Activated T-helper 1 cell treated with anti-CD3 and anti-CD28 coated beads, Interleukin-12 subunit alpha, Interleukin-12 subunit beta, Interleukin-2, Interleukin-4 antibody, amounts not matched to agents 30 ng/mL and 10 ng/mL and 1 ng/mL, durations not matched to agents 14 hours and 24 hours and 36 hours (primary cell): ENCODE measurements at regions of chr15 and their contacts with region 1.

Region 1: DNA sequence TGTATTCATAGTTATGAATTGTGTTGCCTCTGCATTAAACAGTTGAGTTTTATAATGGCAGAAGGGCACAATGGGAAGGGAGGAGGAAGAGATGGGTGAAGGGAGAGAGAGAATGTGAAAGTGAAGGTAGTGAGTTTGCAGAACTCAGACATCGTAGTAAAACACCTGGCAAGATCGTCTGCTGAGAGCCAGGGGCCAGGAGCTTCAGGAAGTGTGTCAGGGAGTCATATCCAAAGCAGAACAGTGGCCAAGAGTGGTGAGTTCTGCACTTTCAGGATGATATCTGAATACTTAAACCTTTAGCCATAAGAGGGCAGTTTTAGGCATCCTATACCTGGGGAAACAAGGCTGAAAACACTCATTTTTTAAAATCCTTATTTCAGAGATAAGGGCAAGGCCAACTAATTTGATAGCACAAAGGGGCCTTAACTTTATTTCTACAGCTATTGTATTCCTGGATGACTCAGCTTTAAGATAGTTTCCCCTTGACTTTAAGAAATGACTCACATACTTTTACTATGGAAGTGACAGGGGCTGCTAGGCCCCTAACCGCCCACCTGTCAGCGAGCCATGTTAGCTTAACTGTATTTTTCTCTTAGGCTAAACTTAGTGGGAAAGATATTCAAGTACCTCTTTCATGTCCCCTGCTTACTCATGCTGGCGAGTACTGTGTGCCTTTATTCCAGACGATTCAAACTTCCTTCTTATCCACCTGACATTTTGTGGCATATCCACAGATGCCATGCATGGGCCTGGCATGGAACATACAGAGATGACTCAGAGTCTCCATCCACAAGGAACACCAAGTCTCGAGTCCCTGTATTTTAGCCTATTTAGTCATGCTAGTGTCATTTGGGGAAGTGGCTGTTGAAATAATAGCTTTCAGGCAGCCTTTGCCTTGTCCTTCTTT is 53.9 kb downstream of the RLBP1 start:
- DNase-seq: no peak
- H3K4me3 Mint-ChIP-seq: peak overlapping the region; percentile 65
- H3K27ac Mint-ChIP-seq: peak overlapping the region; percentile 90
- H3K4me1 Mint-ChIP-seq: peaks cover 31% of the 10 kb centered on the region
- H3K27me3 Mint-ChIP-seq: no peaks in the 10 kb centered on the region

Region 2: DNA sequence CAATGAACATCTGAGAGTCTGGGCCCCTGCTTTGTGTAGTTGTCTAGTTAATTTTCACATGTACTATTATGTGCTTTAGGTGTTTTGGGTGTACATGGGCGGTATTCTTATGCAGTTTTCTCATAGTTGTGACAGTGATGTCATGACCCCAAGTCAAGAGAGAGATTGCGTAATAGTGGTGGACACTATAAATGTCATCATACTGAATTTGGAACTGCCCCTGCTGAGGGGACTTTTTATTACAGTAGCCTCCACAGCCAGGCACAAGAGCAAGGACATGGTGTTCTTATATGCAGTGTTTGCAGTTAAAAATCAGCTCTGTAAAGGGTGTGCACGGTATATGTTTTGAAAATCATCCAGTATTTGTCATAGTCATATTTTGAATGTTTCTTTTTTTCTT is 49.7 kb before region 1 on chr15:
- intact Hi-C with region 1: no loop called
- DNase-seq: no peak
- H3K4me3 Mint-ChIP-seq: no peak overlapping the region
- H3K27ac Mint-ChIP-seq: no peak overlapping the region
- H3K4me1 Mint-ChIP-seq: peaks cover 16% of the 10 kb centered on the region
- H3K27me3 Mint-ChIP-seq: no peaks in the 10 kb centered on the region

Region 3: GRCh38 chr15:89129123-89129815 is 38.3 kb before region 1 on chr15:
- intact Hi-C with region 1: loop called (anchors 5 kb)
- DNase-seq: peak; percentile 16
- H3K4me3 Mint-ChIP-seq: no peak overlapping the region
- H3K27ac Mint-ChIP-seq: no peak overlapping the region
- H3K4me1 Mint-ChIP-seq: peaks cover 19% of the 10 kb centered on the region
- H3K27me3 Mint-ChIP-seq: no peaks in the 10 kb centered on the region

Region 4: DNA sequence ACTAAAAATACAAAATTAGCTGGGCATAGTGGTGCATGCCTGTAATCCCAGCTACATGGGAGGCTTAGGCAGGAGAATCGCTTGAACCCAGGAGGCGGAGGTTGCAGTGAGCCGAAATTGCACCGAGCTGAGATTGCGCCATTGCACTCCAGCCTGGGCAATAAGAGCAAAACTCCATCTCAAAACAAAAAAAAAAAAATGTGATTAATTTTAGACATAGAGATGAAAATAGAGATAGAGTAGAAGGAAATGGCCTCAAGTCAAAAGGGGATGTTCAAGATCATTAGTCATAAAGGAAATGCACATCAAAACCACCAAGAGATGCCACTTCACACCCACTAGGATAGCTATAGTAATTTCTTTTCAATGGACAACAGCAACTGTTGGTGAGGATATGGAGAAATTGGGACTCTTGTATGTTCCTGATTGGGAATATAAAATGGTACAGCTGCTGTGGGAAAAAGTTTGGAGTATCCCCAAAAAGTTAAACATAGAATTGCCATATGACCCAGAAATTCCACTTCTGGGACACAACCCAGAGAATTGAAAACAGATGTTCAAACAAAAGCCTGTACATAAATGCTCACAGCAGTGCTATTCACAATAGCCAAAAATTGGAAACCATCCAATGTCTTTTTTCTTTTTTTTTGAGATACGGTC is 23.9 kb before region 1 on chr15:
- intact Hi-C with region 1: loop called (anchors 1 kb)
- DNase-seq: no peak
- H3K4me3 Mint-ChIP-seq: peak overlapping the region; percentile 22
- H3K27ac Mint-ChIP-seq: no peak overlapping the region
- H3K4me1 Mint-ChIP-seq: peaks cover 31% of the 10 kb centered on the region
- H3K27me3 Mint-ChIP-seq: no peaks in the 10 kb centered on the region